ENCODE measurements at regions of chr3 and their contacts with region 1.

Region 1: DNA sequence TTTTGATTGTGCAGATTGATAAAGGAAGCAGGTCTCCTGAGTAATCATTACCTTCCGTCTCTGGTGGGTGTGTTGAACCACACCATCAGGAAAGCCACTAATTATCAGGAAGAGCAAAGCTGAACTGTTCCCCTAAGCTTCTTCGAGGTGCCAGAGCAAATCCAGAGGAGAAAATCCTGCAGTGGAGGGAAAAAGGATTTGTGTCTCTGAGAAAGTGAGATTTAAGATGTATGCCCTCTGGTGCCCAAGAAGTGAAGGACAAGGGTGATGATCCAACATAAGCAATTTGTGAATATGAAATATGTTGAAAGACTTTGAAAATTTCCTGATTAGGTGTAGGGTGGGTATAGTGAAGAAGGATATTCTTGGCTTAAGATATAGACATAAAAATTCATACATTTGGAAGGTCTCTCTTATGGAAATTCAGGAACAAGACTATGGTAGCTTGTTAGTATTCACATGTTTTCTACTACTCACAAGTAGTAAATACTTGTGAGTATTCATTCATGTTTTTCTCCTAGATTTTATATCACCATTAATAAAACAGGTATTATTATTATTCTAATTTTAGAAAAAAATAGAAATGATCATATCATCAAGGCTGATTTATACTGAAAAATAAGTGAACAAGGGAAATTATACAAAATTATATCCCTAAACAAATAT is 34.8 kb downstream of the COMMD2 start:
- DNase-seq: no peak
- ATAC-seq: peak; percentile 52

Region 2: DNA sequence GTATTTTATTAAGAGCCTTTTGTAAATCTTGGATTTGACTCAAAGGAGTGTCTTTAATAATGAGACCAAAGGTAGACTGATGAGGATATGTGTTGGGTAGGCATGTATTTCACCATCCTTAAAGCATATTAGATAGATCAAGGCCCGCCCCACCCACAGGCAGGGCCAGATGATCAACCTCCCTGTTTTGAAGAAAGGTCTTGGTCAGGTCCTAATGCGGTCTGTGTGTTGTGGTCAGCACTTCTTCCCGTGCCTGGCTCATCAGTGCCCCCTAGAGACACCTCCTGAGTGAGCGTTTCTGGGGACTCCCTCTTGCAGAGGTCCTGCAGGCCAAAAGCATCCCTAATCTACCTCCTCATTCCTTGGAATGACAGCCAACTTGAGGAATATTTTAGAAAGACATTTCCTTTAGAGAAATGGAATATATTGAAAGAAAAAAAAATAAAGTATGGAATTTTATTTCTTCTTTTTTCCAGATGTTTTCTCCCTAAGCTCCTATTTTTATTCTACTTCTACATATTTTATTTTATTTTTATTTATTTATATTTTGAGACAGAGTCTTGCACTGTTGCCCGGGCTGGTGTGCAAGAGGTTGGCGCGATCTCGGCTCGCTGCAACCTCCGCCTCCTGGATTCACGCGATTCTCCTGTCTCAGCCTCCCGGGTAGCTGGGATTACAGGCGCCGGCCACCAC is 237.1 kb before region 1 on chr3:
- intact Hi-C with region 1: no loop called
- DNase-seq: peak; percentile 75
- ATAC-seq: peak; percentile 98

Region 3: DNA sequence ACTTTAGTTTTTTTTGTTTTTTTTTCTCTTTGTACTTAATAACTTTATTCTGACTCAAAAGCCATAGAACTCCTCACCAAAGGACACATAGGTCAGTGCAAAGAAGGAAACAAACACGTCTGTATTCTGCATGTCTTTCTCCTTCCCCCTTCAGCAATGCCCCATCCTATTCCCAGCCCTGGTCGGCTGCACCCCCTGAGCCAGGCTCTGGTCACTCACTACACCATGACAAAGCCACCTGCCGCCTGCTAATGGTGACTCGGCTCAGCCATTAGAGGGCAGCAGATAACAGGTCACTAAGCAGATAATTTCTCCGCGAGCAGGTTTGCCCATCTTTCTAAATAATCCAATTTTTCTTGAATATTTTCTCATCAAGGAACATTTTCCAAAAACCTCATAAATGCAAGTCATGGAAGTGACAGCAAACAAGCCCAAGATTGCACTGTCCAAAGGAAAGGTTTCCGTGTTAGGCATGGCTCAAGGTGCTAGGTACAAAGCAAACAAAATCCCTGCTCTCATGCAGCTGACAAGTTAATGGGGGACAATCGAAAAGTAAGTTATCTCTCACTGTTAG is 205.2 kb before region 1 on chr3:
- intact Hi-C with region 1: loop called (anchors 2 kb)
- DNase-seq: peak; percentile 66
- ATAC-seq: peak; percentile 80

Region 4: DNA sequence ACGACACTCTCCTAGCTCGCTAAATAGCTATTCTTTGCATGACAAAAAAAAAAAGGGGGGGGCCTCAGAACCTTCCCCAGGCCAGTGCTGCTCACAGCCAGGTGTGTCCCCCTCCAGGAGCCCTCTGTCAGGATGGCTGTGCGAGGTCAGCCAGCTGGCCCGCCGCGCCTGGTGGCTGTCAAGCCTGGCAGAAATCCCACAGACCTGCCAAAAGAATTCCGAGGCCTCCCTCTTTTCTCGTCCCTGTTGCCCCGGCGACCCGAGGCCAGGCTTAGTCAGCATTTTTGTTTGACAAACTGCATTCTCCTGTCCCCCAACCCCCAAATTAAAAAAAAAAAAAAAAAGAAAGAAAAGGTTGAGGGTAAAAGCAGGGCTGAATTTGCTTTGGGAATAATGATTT is 181.1 kb before region 1 on chr3:
- intact Hi-C with region 1: loop called (anchors 5 kb)
- DNase-seq: peak; percentile 87
- ATAC-seq: peak; percentile 92